K562 (cell line): ENCODE measurements at regions of chr1 and their contacts with region 1.

Region 1: DNA sequence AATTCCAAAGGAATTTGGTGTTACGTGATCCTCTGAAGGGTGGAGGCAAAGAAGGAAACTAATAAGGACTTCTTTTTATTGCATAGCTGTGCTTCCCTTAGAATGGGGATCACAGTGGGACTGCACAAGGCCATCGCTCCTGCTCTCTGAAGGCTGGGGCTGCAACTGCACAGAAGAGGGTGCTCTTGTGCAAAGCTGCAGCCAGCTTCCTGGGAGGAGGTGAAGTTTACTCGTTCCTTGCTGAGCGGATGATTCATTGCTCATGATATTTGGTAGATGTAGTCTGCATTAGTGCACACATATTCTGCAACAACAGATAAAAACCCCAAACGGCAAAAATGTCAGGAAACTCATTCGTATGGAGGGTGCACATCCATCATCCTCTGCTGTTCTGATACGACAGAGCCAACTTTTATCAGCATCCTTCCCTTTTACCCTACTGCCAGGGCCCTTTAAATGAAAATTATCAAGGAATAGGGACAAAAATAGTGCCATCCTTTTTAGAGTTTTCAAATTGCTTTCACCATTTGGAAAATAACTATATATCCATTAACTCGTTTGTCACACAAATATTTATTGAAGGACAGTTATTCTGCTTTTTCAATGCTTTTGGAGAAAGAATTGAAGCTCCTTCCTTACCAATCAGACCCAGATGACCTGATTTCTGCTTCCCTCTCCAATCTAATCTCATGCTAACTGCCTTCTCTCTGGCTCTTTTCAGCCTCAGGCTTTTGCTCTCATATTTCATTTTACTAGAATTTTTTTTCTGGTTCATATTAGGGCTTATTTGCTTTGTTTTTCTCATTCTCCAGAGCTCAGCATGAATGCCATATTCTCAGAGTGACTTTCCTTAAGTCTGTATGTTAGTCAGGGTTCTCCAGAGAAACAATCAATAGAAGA is 263.6 kb downstream of the DUSP10 start:
- DNase-seq: peak in 2 of 4 experiments; percentile 8 to 53
- ATAC-seq: peak; percentile 89
- H3K4me3 ChIP-seq: no peak overlapping the region
- H3K27ac ChIP-seq: no peak overlapping the region
- H3K4me1 ChIP-seq: no peaks in the 10 kb centered on the region
- H3K27me3 ChIP-seq: no peaks in the 10 kb centered on the region
- CTCF ChIP-seq: peak; percentile 43 to 61 (median 54); a peak in 4 of 6 replicates
- EP300 ChIP-seq: no peak
- POLR2A ChIP-seq: no peak
- RAD21 ChIP-seq: peak; percentile 95

Region 2: DNA sequence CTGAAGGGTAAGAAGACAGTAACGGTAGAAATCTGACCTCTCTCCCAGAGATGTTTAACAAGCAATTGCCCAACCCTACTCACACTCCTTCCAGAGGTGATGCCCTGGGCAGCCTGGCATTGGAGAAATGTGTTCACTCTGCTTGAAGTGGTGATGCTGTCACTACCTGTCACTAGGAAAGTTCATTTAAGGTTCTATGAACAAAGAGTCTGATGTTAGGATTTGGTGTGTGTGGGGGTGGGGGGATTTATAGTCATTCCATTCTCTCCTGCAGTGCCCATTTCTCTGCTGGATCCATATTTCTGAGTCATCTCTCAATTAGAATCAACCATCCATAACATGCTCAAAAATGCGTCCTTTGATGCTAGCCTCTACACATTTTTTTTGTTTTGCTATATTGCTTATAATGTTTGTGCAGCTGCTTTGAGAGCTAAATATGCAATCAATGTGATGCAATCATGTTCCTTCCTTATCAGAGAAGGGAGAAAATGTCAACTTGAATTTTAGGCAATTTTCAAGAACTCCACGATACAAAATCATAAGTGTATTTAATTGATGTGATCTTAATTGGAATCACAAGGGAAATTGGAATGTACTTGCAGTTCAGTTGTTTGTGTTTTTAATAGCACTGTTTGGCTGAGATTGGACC is 89.7 kb after region 1 on chr1:
- CTCF ChIA-PET with region 1: no interaction called
- POLR2A ChIA-PET with region 1: no interaction called
- in situ Hi-C with region 1: no loop called
- intact Hi-C with region 1: no loop called
- DNase-seq: no peak
- ATAC-seq: no peak
- H3K4me3 ChIP-seq: no peak overlapping the region
- H3K27ac ChIP-seq: no peak overlapping the region
- H3K4me1 ChIP-seq: no peaks in the 10 kb centered on the region; a peak in 1 of 5 replicates
- H3K27me3 ChIP-seq: no peaks in the 10 kb centered on the region
- CTCF ChIP-seq: no peak
- EP300 ChIP-seq: no peak
- POLR2A ChIP-seq: no peak
- RAD21 ChIP-seq: no peak

Region 3: DNA sequence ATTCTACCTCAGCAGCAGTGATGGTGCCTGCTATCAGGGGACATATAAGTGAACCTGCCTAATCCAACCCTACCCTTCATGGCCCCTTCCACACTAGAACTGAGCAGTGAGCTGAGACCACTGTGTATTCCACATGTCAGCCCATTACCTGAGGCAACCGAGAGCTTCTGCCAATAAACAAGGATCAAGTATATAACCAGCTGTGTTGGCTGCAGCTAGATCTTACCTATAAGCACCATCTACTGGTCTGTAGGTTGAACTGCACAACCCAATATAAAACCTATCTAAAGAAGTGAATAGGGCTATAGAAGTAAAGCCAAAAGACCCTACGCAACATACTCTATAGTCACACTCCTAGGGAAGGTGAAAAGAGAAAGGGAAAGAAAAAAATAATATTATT is 692.7 kb after region 1 on chr1:
- CTCF ChIA-PET with region 1: interaction called, 3 read pairs
- POLR2A ChIA-PET with region 1: no interaction called
- in situ Hi-C with region 1: no loop called
- intact Hi-C with region 1: loop called (anchors 5 kb)
- DNase-seq: peak in 2 of 4 experiments; percentile 9 to 19
- ATAC-seq: peak; percentile 77
- H3K4me3 ChIP-seq: no peak overlapping the region
- H3K27ac ChIP-seq: no peak overlapping the region
- H3K4me1 ChIP-seq: no peaks in the 10 kb centered on the region
- H3K27me3 ChIP-seq: no peaks in the 10 kb centered on the region
- CTCF ChIP-seq: peak; percentile 15 to 50 (median 37); a peak in 4 of 6 replicates
- EP300 ChIP-seq: no peak
- POLR2A ChIP-seq: no peak
- RAD21 ChIP-seq: peak; percentile 41 to 71; a peak in 3 of 4 replicates